ENCODE measurements at regions of chr5 and their contacts with region 1.

Region 1: DNA sequence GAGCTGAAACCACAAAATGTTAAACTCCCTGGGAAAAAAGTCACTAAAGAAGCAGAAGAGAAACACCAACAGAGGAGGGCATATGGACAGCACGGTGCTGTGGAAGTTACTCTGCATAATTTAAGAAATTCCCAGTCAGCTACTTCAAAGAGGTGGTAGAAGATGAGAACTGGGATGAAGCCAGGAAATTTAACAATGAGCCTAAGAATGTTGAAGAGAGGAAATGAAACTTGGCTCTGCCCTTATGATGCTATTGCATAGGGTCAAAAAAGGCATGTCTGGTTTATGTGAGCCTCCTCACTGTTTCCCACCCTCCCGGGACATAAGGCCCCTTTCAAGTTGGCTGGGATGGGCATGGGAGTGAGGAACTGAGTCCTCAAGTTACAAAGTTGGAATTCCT is 25.4 kb upstream of the SNX18 start:
- ATAC-seq: peak in 3 of 8 experiments; percentile 56 to 68 (median 65)
- H3K4me3 ChIP-seq: no peak overlapping the region
- H3K27ac ChIP-seq: no peak overlapping the region
- H3K4me1 ChIP-seq: no peaks in the 10 kb centered on the region

Region 2: GRCh38 chr5:54438620-54439394 is 53.4 kb before region 1 on chr5:
- in situ Hi-C with region 1: loop called in 1 of 9 experiments (anchors 10 kb)
- ATAC-seq: no peak
- H3K4me3 ChIP-seq: no peak overlapping the region
- H3K27ac ChIP-seq: no peak overlapping the region
- H3K4me1 ChIP-seq: no peaks in the 10 kb centered on the region

Region 3: GRCh38 chr5:54852007-54852406 is 359.8 kb after region 1 on chr5:
- in situ Hi-C with region 1: no loop called
- ATAC-seq: no peak
- H3K4me3 ChIP-seq: no peak overlapping the region
- H3K27ac ChIP-seq: no peak overlapping the region
- H3K4me1 ChIP-seq: no peaks in the 10 kb centered on the region

Region 4: GRCh38 chr5:54905943-54906537 is 413.9 kb after region 1 on chr5:
- in situ Hi-C with region 1: no loop called
- ATAC-seq: peak in 4 of 8 experiments; percentile 19 to 42 (median 32)
- H3K4me3 ChIP-seq: no peak overlapping the region
- H3K27ac ChIP-seq: no peak overlapping the region
- H3K4me1 ChIP-seq: no peaks in the 10 kb centered on the region